ENCODE measurements at regions of chr7 and their contacts with region 1.

Region 1: GRCh38 chr7:74401137-74401859 is 52.4 kb upstream of the GTF2IRD1 start:
- DNase-seq: no peak
- H3K4me3 ChIP-seq: no peak overlapping the region
- H3K27me3 ChIP-seq: no peaks in the 10 kb centered on the region
- CTCF ChIP-seq: peak; percentile 96

Region 2: GRCh38 chr7:74193054-74193453 is 208.2 kb before region 1 on chr7:
- CTCF ChIA-PET with region 1: interaction called, 13 read pairs
- POLR2A ChIA-PET with region 1: no interaction called
- DNase-seq: no peak
- H3K4me3 ChIP-seq: no peak overlapping the region
- H3K27me3 ChIP-seq: no peaks in the 10 kb centered on the region
- CTCF ChIP-seq: no peak

Region 3: GRCh38 chr7:74206589-74207120 is 194.6 kb before region 1 on chr7:
- CTCF ChIA-PET with region 1: interaction called, 416 read pairs
- POLR2A ChIA-PET with region 1: no interaction called
- DNase-seq: no peak
- H3K4me3 ChIP-seq: no peak overlapping the region
- H3K27me3 ChIP-seq: no peaks in the 10 kb centered on the region
- CTCF ChIP-seq: peak; percentile 96

Region 4: DNA sequence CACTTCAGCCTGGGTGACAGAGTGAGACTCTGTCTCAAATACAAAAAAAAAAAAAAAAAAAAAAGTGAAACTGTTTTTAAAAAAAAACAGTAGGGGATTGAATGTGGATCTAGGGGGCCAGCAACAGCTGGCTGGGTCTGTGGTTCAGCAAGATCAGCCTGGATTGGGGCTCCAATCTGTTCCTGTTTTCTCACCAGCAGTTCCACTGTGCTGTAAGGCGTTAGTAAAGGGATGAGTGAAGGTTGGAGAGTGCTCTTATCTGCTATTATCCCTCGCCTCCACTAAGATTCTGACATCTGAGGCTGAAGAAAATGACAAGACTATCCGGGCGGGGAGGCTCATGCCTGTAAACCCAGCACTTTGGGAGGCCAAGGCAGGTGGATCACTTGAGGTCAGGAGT is 10.8 kb after region 1 on chr7:
- CTCF ChIA-PET with region 1: interaction called, 18 read pairs
- POLR2A ChIA-PET with region 1: no interaction called
- DNase-seq: no peak
- H3K4me3 ChIP-seq: no peak overlapping the region
- H3K27me3 ChIP-seq: no peaks in the 10 kb centered on the region
- CTCF ChIP-seq: no peak

Measured in BJ (cell line).